ENCODE measurements at regions of chr11 and their contacts with region 1.

Region 1: GRCh38 chr11:16082095-16083055 is 274.0 kb downstream of the SOX6 start:
- DNase-seq: no peak
- ATAC-seq: no peak
- H3K4me3 ChIP-seq: no peak overlapping the region
- H3K27ac ChIP-seq: no peak overlapping the region
- H3K4me1 ChIP-seq: no peaks in the 10 kb centered on the region
- H3K27me3 ChIP-seq: no peaks in the 10 kb centered on the region
- CTCF ChIP-seq: no peak

Region 2: GRCh38 chr11:15523543-15523942 is 558.8 kb before region 1 on chr11:
- intact Hi-C with region 1: loop called (anchors 10 kb)
- DNase-seq: no peak
- ATAC-seq: no peak
- H3K4me3 ChIP-seq: no peak overlapping the region
- H3K27ac ChIP-seq: no peak overlapping the region
- H3K4me1 ChIP-seq: no peaks in the 10 kb centered on the region
- H3K27me3 ChIP-seq: no peaks in the 10 kb centered on the region
- CTCF ChIP-seq: no peak

Measured in upper lobe of right lung (tissue), 1 donor.